Activated T-helper 2 cell treated with anti-CD3 and anti-CD28 coated beads, Interferon-gamma antibody, Interleukin-2, Interleukin-4, amounts not matched to agents 10 μg/mL and 5 μg/mL and 100 μg/mL, durations not matched to agents 14 hours and 24 hours and 36 hours (primary cell): ENCODE measurements at regions of chr19 and their contacts with region 1.

Region 1: DNA sequence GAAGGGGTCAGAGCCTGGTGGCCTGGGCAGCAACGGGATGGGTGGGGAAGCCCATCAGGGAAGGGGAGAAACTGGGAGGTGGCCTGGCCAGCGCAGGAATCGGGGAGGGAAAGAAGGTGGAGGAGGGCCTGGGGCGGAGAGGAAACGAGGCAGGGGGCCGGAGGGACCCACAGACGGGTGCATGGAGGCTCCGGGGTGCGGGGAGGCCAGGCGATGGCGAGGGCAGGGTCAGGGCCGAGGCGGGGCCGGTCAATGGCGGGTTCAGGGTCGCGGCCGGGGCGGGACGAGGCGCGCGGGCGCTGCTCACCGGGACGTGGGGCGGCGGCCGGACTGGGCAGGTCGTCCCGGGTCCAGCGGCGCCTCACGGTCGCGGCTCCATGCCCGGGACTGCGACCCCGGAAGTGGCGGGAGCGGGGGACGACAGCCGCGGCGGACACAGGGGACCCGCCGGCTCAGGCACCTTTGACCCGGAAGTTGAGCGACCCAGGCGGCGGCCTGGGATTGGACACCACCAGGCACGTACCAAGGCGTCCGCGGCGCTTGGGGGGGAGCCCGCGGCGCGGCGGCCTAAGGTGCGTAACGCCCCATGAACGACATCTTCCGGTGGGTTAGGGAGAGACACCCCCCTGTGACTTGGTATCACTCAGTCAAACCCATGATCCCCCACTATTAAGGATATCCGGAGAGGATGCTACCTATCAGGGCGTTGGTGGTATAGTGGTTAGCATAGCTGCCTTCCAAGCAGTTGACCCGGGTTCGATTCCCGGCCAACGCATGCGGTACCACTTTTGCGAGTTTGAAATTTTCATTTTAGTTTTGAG is at the start of gene DPP9:
- DNase-seq: peak; percentile 97
- H3K4me3 Mint-ChIP-seq: peak within 1 kb of the TSS; percentile 100
- H3K27ac Mint-ChIP-seq: peak within 1 kb of the TSS; percentile 95
- H3K4me1 Mint-ChIP-seq: peaks cover 12% of the 10 kb centered on the region
- H3K27me3 Mint-ChIP-seq: no peaks in the 10 kb centered on the region
- total RNA-seq, gene DPP9: 84.8 and 87.2 TPM in 2 replicates

Region 2: DNA sequence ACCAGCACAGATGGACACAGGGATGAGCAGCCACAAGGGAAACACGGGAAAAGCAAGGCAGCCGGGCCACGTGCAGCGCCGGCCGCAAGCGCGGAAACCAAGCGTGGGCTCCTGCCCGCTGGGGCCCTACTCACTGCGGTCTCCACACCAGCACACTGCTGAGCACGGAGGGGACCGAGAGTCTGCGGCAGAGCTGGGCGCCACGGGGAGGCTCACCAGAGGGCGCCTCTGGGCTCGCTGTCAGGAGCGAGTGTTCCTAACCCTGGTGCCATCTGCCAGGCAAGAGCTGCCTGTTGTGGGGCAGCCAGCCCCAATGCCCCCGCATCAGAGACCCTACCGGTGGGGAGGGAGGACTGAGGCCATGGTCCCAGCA is 353.7 kb before region 1 on chr19:
- intact Hi-C with region 1: loop called (anchors 5 kb)
- DNase-seq: peak; percentile 69
- H3K4me3 Mint-ChIP-seq: peak overlapping the region; percentile 66
- H3K27ac Mint-ChIP-seq: peak overlapping the region; percentile 82
- H3K4me1 Mint-ChIP-seq: peaks cover 34% of the 10 kb centered on the region
- H3K27me3 Mint-ChIP-seq: no peaks in the 10 kb centered on the region

Region 3: GRCh38 chr19:4471403-4472173 is 252.0 kb before region 1 on chr19:
- intact Hi-C with region 1: loop called (anchors 5 kb)
- DNase-seq: peak; percentile 99
- H3K4me3 Mint-ChIP-seq: no peak overlapping the region
- H3K27ac Mint-ChIP-seq: no peak overlapping the region
- H3K4me1 Mint-ChIP-seq: peaks cover 18% of the 10 kb centered on the region
- H3K27me3 Mint-ChIP-seq: no peaks in the 10 kb centered on the region

Region 4: GRCh38 chr19:4669723-4670480 is 53.7 kb before region 1 on chr19 and contains the start of gene MYDGF:
- intact Hi-C with region 1: loop called (anchors 1 kb)
- DNase-seq: peak; percentile 89
- H3K4me3 Mint-ChIP-seq: peak within 1 kb of the TSS; percentile 87
- H3K27ac Mint-ChIP-seq: peak within 1 kb of the TSS; percentile 72
- H3K4me1 Mint-ChIP-seq: peaks cover 11% of the 10 kb centered on the region
- H3K27me3 Mint-ChIP-seq: no peaks in the 10 kb centered on the region
- total RNA-seq, gene MYDGF: 105 and 110 TPM in 2 replicates

Region 5: DNA sequence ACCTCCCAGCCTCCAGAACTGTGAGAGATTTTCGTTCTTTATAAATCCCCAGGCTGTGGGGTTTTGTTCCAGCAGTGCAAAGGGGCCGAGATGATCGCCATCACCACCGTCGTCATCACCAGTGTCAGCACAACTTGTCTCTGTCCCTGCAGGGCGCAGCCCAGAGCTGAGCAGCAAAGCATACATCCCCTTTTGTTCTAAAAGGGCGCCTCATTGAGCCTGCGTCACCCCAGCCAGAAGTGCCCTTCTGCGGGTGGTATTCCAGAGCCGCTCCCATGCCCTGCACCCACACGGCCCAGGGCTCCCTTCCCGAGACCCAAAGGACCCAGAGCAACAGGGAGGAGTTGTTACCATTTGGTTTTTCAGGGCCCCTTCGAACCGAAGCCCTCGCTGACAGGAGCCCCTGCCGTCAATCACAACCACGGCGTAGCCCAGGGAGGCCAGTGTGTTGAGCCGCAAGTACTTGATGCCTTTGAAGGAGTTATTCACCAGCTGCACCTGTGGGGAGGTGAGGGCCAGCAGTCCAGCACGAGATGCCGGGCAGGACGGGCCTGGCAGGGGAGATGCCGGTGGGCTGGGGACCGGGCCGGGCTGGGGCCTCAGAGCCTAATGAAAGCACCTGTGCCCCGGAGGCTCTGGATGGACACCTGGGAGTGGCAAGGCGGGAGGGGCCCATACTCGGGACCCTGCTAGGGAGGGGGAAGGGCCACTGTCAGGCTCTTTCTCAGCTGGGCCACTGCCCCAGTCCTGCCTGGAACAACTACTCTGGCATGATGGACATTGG is 39.1 kb before region 1 on chr19:
- intact Hi-C with region 1: no loop called
- DNase-seq: no peak
- H3K4me3 Mint-ChIP-seq: no peak overlapping the region
- H3K27ac Mint-ChIP-seq: no peak overlapping the region
- H3K4me1 Mint-ChIP-seq: no peaks in the 10 kb centered on the region
- H3K27me3 Mint-ChIP-seq: no peaks in the 10 kb centered on the region

Region 6: GRCh38 chr19:4713384-4713951 is 10.1 kb before region 1 on chr19:
- intact Hi-C with region 1: no loop called
- DNase-seq: no peak
- H3K4me3 Mint-ChIP-seq: no peak overlapping the region
- H3K27ac Mint-ChIP-seq: no peak overlapping the region
- H3K4me1 Mint-ChIP-seq: peaks cover 2% of the 10 kb centered on the region
- H3K27me3 Mint-ChIP-seq: no peaks in the 10 kb centered on the region

Region 7: GRCh38 chr19:4742723-4743646 is 19.4 kb after region 1 on chr19:
- intact Hi-C with region 1: no loop called
- DNase-seq: no peak
- H3K4me3 Mint-ChIP-seq: no peak overlapping the region
- H3K27ac Mint-ChIP-seq: no peak overlapping the region
- H3K4me1 Mint-ChIP-seq: peaks cover 3% of the 10 kb centered on the region
- H3K27me3 Mint-ChIP-seq: peaks cover 12% of the 10 kb centered on the region

Region 8: GRCh38 chr19:4889034-4889815 is 165.6 kb after region 1 on chr19:
- intact Hi-C with region 1: no loop called
- DNase-seq: no peak
- H3K4me3 Mint-ChIP-seq: no peak overlapping the region
- H3K27ac Mint-ChIP-seq: no peak overlapping the region
- H3K4me1 Mint-ChIP-seq: no peaks in the 10 kb centered on the region
- H3K27me3 Mint-ChIP-seq: no peaks in the 10 kb centered on the region